Ascending aorta (tissue), 2 donors: ENCODE measurements at regions of chr1 and their contacts with region 1.

Region 1: GRCh38 chr1:108691942-108692723 is at the start of gene PRPF38B:
- DNase-seq: peak; percentile 80 to 97
- H3K4me3 ChIP-seq: peak within 1 kb of the TSS; percentile 82 to 98
- H3K27ac ChIP-seq: peak within 1 kb of the TSS; percentile 92 to 99
- H3K4me1 ChIP-seq: peaks cover 0 to 16% of the 10 kb centered on the region in 2 donors
- H3K27me3 ChIP-seq: no peaks in the 10 kb centered on the region
- CTCF ChIP-seq: no peak
- total RNA-seq, gene PRPF38B: 9.0 TPM

Region 2: GRCh38 chr1:108661030-108661620 is 31.0 kb before region 1 on chr1 and contains the start of gene HENMT1:
- intact Hi-C with region 1: loop called (anchors 2 kb)
- DNase-seq: peak in 1 of 2 donors; percentile 78
- H3K4me3 ChIP-seq: peak within 1 kb of the TSS; percentile 74 to 87
- H3K27ac ChIP-seq: peak within 1 kb of the TSS; percentile 92 to 93
- H3K4me1 ChIP-seq: peaks cover 0 to 3% of the 10 kb centered on the region in 2 donors
- H3K27me3 ChIP-seq: no peaks in the 10 kb centered on the region
- CTCF ChIP-seq: no peak
- total RNA-seq, gene HENMT1: not detected

Region 3: DNA sequence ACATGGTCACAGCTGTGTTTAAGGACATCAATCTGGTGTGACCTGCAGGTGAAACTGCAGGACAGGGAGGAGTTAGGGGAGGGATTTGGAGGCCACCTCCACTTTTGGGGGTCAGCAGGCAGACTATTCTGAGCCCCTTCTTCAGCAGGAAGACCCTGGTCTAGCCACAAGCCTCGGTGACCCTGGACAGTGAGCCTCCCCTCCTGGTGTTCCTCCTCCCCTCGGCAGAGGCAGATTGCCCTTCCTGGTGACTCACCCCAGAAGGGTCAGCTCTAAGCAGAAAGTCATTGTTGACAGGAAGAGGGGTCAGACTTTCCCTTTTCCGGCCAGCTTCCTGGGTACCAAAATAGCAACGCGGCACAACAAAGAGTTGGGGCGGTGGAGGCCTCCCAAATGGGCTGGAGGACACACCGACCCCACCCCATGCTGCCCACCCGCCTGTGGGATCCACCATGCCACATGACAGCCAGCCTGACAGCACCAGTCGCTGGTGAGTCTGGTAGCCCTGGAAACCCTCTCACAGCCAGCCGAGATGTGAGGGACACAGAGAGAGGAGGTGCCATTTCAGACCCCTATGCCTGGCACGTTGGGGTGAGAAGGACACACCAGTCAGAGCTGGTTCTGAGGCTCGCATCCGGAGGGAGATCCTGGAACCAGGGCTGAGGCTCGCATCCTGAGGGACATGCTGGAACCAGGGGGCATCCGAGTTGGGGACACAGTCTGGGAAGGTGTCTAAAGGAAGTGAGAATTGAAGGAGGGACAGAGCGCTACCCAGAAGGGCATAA is 1203.8 kb after region 1 on chr1:
- intact Hi-C with region 1: no loop called
- DNase-seq: peak in 1 of 2 donors; percentile 76
- H3K4me3 ChIP-seq: peak overlapping the region in 1 of 2 donors; percentile 15
- H3K27ac ChIP-seq: no peak overlapping the region
- H3K4me1 ChIP-seq: no peaks in the 10 kb centered on the region
- H3K27me3 ChIP-seq: no peaks in the 10 kb centered on the region
- CTCF ChIP-seq: no peak